Heart right ventricle (tissue), 16 donors: ENCODE measurements at regions of chr2 and their contacts with region 1.

Region 1: GRCh38 chr2:53609551-53609950 is 158.1 kb upstream of the CHAC2 start:
- DNase-seq: no peak
- ATAC-seq: no peak
- H3K4me3 ChIP-seq: no peak overlapping the region
- H3K27ac ChIP-seq: no peak overlapping the region
- H3K4me1 ChIP-seq: no peaks in the 10 kb centered on the region
- H3K27me3 ChIP-seq: no peaks in the 10 kb centered on the region
- CTCF ChIP-seq: no peak

Region 2: DNA sequence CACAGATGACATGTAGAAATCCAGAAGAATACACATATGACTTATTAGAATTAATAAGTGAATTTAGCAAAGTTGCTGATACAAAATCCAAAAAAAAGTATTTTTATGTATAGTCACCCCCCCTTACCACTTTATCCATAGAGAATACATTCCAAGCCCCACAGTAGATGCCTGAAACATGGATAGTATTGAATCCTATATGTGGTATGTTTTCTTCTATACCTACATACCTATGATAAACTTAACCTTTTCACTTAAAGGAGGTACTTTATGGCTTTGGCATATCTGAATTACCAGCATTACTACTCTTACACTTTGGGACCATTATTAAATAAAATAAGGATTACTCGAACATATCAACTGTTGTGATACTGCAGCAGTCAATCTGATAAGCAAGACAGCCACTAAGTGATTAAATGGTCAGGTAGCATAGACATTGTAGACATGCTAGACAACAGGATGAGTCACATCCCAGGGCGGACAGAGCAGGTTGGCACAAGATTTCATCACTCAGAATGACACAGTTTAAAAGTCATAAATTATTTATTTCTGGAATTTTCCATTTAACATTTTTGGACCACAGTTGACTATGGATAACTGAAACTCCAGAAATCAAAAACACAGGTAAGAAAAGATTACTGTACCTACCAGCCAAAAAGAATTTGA is 50.1 kb before region 1 on chr2:
- intact Hi-C with region 1: loop called in 1 of 10 experiments (anchors 2 kb)
- DNase-seq: no peak
- ATAC-seq: no peak
- H3K4me3 ChIP-seq: no peak overlapping the region
- H3K27ac ChIP-seq: no peak overlapping the region
- H3K4me1 ChIP-seq: no peaks in the 10 kb centered on the region
- H3K27me3 ChIP-seq: no peaks in the 10 kb centered on the region
- CTCF ChIP-seq: no peak